Activated naive CD4-positive, alpha-beta T cell treated with anti-CD3 and anti-CD28 coated beads, Interleukin-2, amount 10 ng/mL, durations not matched to agents 7 days and 5 days (primary cell): ENCODE measurements at regions of chr15 and their contacts with region 1.

Region 1: GRCh38 chr15:89206908-89207331 is 14.5 kb downstream of the RLBP1 start:
- DNase-seq: peak; percentile 75
- H3K4me3 Mint-ChIP-seq: no peak overlapping the region
- H3K27ac Mint-ChIP-seq: no peak overlapping the region
- H3K4me1 Mint-ChIP-seq: peaks cover 31% of the 10 kb centered on the region
- H3K27me3 Mint-ChIP-seq: peaks cover 20% of the 10 kb centered on the region

Region 2: DNA sequence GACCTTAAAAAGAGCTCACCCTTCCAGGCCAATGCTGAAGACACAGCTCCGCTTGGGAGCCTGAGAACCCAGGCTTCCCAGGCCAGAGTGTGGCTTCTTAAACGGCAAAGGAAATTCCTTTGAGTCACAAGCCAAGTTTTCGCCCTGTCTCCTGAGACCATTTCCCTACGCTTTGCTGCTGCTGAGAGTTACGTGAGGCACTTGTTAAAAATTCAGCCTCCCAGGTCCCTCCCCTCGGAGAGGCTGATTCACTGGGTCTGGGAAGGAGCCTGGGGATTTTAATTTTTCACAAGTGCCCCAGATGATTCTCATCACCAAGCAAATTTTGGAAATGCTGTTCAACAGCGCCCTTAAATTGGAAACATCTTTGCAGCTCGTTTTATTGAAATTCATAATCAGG is 11.1 kb before region 1 on chr15:
- CTCF ChIA-PET with region 1: interaction called, 13 read pairs
- DNase-seq: no peak
- H3K4me3 Mint-ChIP-seq: no peak overlapping the region
- H3K27ac Mint-ChIP-seq: no peak overlapping the region
- H3K4me1 Mint-ChIP-seq: peaks cover 4% of the 10 kb centered on the region
- H3K27me3 Mint-ChIP-seq: no peaks in the 10 kb centered on the region

Region 3: DNA sequence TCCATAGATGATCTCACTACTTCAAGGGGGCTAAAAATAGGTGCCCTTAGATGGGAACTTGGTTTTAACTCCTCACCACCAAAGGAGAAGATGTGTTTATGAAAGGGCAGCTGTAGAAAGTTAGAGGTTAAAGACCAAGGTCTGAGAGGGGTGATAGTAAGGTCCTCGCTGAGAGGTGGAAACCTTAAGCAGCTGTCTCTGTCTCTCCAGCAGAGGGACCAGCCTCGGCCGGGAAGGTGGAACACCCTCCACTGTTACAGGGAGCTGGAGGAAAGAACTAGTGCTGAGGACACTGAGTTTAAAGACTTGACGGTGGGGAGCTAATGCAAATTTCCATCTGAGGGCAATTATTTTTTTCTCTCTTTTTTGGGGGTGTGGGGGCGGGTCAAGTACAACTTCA is 23.4 kb after region 1 on chr15:
- CTCF ChIA-PET with region 1: interaction called, 18 read pairs
- DNase-seq: no peak
- H3K4me3 Mint-ChIP-seq: no peak overlapping the region
- H3K27ac Mint-ChIP-seq: no peak overlapping the region
- H3K4me1 Mint-ChIP-seq: no peaks in the 10 kb centered on the region
- H3K27me3 Mint-ChIP-seq: peaks cover 41% of the 10 kb centered on the region

Region 4: DNA sequence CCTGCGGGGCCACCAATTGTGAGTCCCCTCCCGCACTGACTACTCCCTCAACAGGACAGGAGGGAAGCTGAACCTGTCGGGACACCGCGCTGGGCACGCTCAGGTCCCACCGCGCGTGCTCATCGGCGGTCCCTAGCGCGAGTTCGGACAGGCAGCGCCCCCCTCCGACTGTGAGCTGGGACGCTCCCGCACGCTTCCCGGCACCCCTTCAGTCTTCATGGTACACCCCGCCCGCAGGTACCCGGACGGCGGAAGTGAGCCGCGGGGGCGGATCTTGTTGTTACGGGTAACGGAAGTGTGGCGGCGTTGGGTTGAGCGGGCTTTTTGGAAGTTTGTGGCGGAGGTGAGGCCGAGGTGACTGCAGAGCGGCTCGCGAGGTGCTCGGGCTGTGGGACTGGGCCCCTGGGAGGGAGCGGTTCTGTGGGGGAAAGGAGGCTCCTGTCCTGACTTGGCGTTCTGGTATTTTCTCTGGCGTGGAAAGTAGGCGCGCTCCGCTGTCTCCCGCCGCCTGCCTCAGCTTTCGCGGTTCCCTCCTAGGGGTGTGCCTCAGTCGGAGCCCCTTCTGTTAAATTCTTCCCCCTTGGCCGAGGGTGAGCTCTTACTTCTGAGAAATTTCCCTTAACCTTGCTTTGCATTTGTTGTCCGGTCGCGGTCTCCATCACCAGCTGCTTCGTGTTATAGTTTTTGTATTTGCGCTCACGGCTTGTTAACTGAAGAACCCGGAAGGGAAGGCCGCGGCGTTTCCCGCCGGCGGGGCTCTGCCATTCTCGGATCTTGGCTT is 37.0 kb after region 1 on chr15 and contains the start of gene FANCI:
- CTCF ChIA-PET with region 1: interaction called, 19 read pairs
- DNase-seq: peak; percentile 98
- H3K4me3 Mint-ChIP-seq: peak within 1 kb of the TSS; percentile 99
- H3K27ac Mint-ChIP-seq: peak within 1 kb of the TSS; percentile 96
- H3K4me1 Mint-ChIP-seq: peaks cover 47% of the 10 kb centered on the region
- H3K27me3 Mint-ChIP-seq: peaks cover 26% of the 10 kb centered on the region

Region 5: GRCh38 chr15:89299896-89300295 is 93.0 kb after region 1 on chr15:
- CTCF ChIA-PET with region 1: interaction called, 21 read pairs
- DNase-seq: no peak
- H3K4me3 Mint-ChIP-seq: no peak overlapping the region
- H3K27ac Mint-ChIP-seq: no peak overlapping the region
- H3K4me1 Mint-ChIP-seq: peaks cover 16% of the 10 kb centered on the region
- H3K27me3 Mint-ChIP-seq: no peaks in the 10 kb centered on the region